A673 (cell line): ENCODE measurements at regions of chr6 and their contacts with region 1.

Region 1: GRCh38 chr6:19795211-19795610 is 42.0 kb upstream of the ID4 start:
- DNase-seq: no peak
- H3K4me3 ChIP-seq: no peak overlapping the region
- H3K27ac ChIP-seq: no peak overlapping the region
- H3K4me1 ChIP-seq: peaks cover 9% of the 10 kb centered on the region
- H3K27me3 ChIP-seq: no peaks in the 10 kb centered on the region
- CTCF ChIP-seq: no peak

Region 2: GRCh38 chr6:19655744-19656143 is 139.5 kb before region 1 on chr6:
- CTCF ChIA-PET with region 1: no interaction called
- POLR2A ChIA-PET with region 1: interaction called, 11 read pairs
- intact Hi-C with region 1: loop called (anchors 5 kb)
- DNase-seq: peak; percentile 39
- H3K4me3 ChIP-seq: peak overlapping the region; percentile 38
- H3K27ac ChIP-seq: no peak overlapping the region
- H3K4me1 ChIP-seq: no peaks in the 10 kb centered on the region
- H3K27me3 ChIP-seq: no peaks in the 10 kb centered on the region
- CTCF ChIP-seq: no peak